Caco-2 (cell line): ENCODE measurements at regions of chr1 and their contacts with region 1.

Region 1: GRCh38 chr1:207181838-207182237 is 77.8 kb downstream of the C4BPA start:
- DNase-seq: peak in 1 of 2 experiments; percentile 8
- H3K4me3 ChIP-seq: no peak overlapping the region
- H3K4me3 Mint-ChIP-seq: no peak overlapping the region
- H3K27ac Mint-ChIP-seq: no peak overlapping the region
- H3K4me1 ChIP-seq: no peaks in the 10 kb centered on the region
- H3K4me1 Mint-ChIP-seq: peaks cover 5% of the 10 kb centered on the region
- H3K27me3 ChIP-seq: no peaks in the 10 kb centered on the region
- H3K27me3 Mint-ChIP-seq: no peaks in the 10 kb centered on the region
- CTCF ChIP-seq: peak in 1 of 2 experiments; percentile 38

Region 2: GRCh38 chr1:207404849-207405525 is 223.1 kb after region 1 on chr1:
- CTCF ChIA-PET with region 1: no interaction called
- POLR2A ChIA-PET with region 1: no interaction called
- intact Hi-C with region 1: loop called (anchors 1 kb)
- DNase-seq: peak in 1 of 2 experiments; percentile 35
- H3K4me3 ChIP-seq: no peak overlapping the region
- H3K4me3 Mint-ChIP-seq: no peak overlapping the region
- H3K27ac Mint-ChIP-seq: no peak overlapping the region
- H3K4me1 ChIP-seq: 0 out of 2 replicates have a peak, but pooled peaks cover 4% of the 10 kb centered on the region
- H3K4me1 Mint-ChIP-seq: no peaks in the 10 kb centered on the region
- H3K27me3 ChIP-seq: no peaks in the 10 kb centered on the region
- H3K27me3 Mint-ChIP-seq: no peaks in the 10 kb centered on the region
- CTCF ChIP-seq: peak; percentile 58 to 76